PC-3 (cell line): ENCODE measurements at regions of chr2 and their contacts with region 1.

Region 1: GRCh38 chr2:150487537-150488429 is at the start of gene RND3:
- DNase-seq: peak; percentile 99
- ATAC-seq: peak; percentile 46
- H3K4me3 ChIP-seq: peak within 1 kb of the TSS; percentile 90
- H3K27ac ChIP-seq: peak within 1 kb of the TSS; percentile 98
- H3K4me1 ChIP-seq: peaks cover 42% of the 10 kb centered on the region
- H3K27me3 ChIP-seq: no peaks in the 10 kb centered on the region
- CTCF ChIP-seq: peak; percentile 93
- total RNA-seq, gene RND3: 145 and 201 TPM in 2 replicates

Region 2: DNA sequence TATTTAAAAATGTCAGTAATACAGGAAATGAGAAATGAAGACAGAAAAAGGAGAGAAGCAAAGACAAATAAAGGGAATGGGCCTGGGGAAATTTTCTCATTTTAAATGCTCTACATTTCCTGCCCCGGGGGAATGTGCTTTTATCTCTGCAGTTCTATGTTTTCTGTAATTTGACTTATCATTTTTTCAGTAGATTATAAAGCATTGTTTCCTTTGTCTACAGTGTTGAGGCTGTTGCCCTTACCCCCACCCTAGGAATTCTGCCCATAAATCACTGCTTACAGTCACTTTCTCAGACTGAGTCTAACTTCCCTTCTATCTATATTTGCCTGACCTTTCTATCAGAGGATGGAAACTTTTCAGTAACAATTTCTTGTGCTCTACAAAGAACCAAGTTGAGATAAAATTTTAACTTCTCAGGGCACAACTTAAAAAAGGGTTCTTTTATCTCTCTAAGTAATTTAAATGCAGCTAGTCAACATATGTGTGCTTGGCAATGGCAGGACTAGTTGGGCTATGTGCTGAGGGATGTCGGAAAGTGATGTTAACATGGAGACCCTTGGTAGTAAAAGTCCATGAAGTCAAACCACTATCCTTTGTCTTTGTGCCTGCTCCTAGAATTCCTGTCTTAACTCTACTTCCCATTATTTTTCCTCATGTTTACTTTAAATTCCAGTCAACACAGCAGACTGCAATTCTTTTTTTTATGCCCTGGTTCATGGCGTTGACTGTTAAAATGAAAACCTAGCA is 753.7 kb before region 1 on chr2:
- CTCF ChIA-PET with region 1: no interaction called
- POLR2A ChIA-PET with region 1: no interaction called
- intact Hi-C with region 1: loop called (anchors 10 kb)
- DNase-seq: peak; percentile 80
- ATAC-seq: peak; percentile 55
- H3K4me3 ChIP-seq: no peak overlapping the region
- H3K27ac ChIP-seq: peak overlapping the region; percentile 97
- H3K4me1 ChIP-seq: peaks cover 42% of the 10 kb centered on the region
- H3K27me3 ChIP-seq: no peaks in the 10 kb centered on the region
- CTCF ChIP-seq: no peak

Region 3: GRCh38 chr2:149877913-149878312 is 609.9 kb before region 1 on chr2:
- CTCF ChIA-PET with region 1: no interaction called
- POLR2A ChIA-PET with region 1: no interaction called
- intact Hi-C with region 1: no loop called
- DNase-seq: peak; percentile 93
- ATAC-seq: peak; percentile 90
- H3K4me3 ChIP-seq: no peak overlapping the region
- H3K27ac ChIP-seq: peak overlapping the region; percentile 50
- H3K4me1 ChIP-seq: peaks cover 17% of the 10 kb centered on the region
- H3K27me3 ChIP-seq: no peaks in the 10 kb centered on the region
- CTCF ChIP-seq: no peak

Region 4: GRCh38 chr2:149994057-149994753 is 493.6 kb before region 1 on chr2:
- CTCF ChIA-PET with region 1: no interaction called
- POLR2A ChIA-PET with region 1: no interaction called
- intact Hi-C with region 1: loop called (anchors 10 kb)
- DNase-seq: peak; percentile 98
- ATAC-seq: peak; percentile 59
- H3K4me3 ChIP-seq: no peak overlapping the region
- H3K27ac ChIP-seq: peak overlapping the region; percentile 45
- H3K4me1 ChIP-seq: peaks cover 56% of the 10 kb centered on the region
- H3K27me3 ChIP-seq: no peaks in the 10 kb centered on the region
- CTCF ChIP-seq: no peak

Region 5: GRCh38 chr2:150438654-150439053 is 49.1 kb before region 1 on chr2:
- CTCF ChIA-PET with region 1: no interaction called
- POLR2A ChIA-PET with region 1: no interaction called
- intact Hi-C with region 1: no loop called
- DNase-seq: peak; percentile 92
- ATAC-seq: peak; percentile 94
- H3K4me3 ChIP-seq: no peak overlapping the region
- H3K27ac ChIP-seq: peak overlapping the region; percentile 42
- H3K4me1 ChIP-seq: peaks cover 12% of the 10 kb centered on the region
- H3K27me3 ChIP-seq: no peaks in the 10 kb centered on the region
- CTCF ChIP-seq: no peak

Region 6: GRCh38 chr2:150508497-150509137 is 20.8 kb after region 1 on chr2:
- CTCF ChIA-PET with region 1: no interaction called
- POLR2A ChIA-PET with region 1: no interaction called
- intact Hi-C with region 1: no loop called
- DNase-seq: no peak
- ATAC-seq: no peak
- H3K4me3 ChIP-seq: no peak overlapping the region
- H3K27ac ChIP-seq: no peak overlapping the region
- H3K4me1 ChIP-seq: peaks cover 6% of the 10 kb centered on the region
- H3K27me3 ChIP-seq: no peaks in the 10 kb centered on the region
- CTCF ChIP-seq: no peak

Region 7: GRCh38 chr2:150528861-150529801 is 41.3 kb after region 1 on chr2:
- CTCF ChIA-PET with region 1: no interaction called
- POLR2A ChIA-PET with region 1: no interaction called
- intact Hi-C with region 1: loop called (anchors 1 kb)
- DNase-seq: peak; percentile 92
- ATAC-seq: peak; percentile 75
- H3K4me3 ChIP-seq: peak overlapping the region; percentile 34
- H3K27ac ChIP-seq: peak overlapping the region; percentile 91
- H3K4me1 ChIP-seq: peaks cover 69% of the 10 kb centered on the region
- H3K27me3 ChIP-seq: no peaks in the 10 kb centered on the region
- CTCF ChIP-seq: no peak

Region 8: GRCh38 chr2:150681120-150681804 is 193.5 kb after region 1 on chr2:
- CTCF ChIA-PET with region 1: no interaction called
- POLR2A ChIA-PET with region 1: no interaction called
- intact Hi-C with region 1: loop called (anchors 5 kb)
- DNase-seq: peak; percentile 86
- ATAC-seq: peak; percentile 79
- H3K4me3 ChIP-seq: no peak overlapping the region
- H3K27ac ChIP-seq: peak overlapping the region; percentile 93
- H3K4me1 ChIP-seq: peaks cover 45% of the 10 kb centered on the region
- H3K27me3 ChIP-seq: no peaks in the 10 kb centered on the region
- CTCF ChIP-seq: no peak

Region 9: DNA sequence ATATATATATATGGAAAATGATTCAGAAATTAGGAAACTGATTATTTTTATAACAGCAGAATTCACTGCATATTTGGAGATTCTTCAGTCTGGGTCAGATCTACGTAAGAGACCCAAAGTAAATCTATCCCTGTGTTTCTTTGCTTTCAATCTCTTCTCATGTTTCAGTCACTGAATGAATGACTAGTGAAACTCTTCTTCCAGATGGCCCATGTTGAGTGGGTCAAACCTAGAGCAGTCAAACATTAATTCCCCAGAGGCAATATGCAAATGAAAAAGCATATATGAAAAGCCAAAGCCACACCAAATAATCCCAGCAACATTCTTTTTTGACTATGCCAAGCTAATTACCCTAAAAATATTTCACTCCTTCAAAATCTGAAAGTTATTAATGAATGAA is 456.5 kb after region 1 on chr2:
- CTCF ChIA-PET with region 1: no interaction called
- POLR2A ChIA-PET with region 1: no interaction called
- intact Hi-C with region 1: loop called (anchors 10 kb)
- DNase-seq: no peak
- ATAC-seq: no peak
- H3K4me3 ChIP-seq: no peak overlapping the region
- H3K27ac ChIP-seq: no peak overlapping the region
- H3K4me1 ChIP-seq: no peaks in the 10 kb centered on the region
- H3K27me3 ChIP-seq: no peaks in the 10 kb centered on the region
- CTCF ChIP-seq: no peak

Region 10: DNA sequence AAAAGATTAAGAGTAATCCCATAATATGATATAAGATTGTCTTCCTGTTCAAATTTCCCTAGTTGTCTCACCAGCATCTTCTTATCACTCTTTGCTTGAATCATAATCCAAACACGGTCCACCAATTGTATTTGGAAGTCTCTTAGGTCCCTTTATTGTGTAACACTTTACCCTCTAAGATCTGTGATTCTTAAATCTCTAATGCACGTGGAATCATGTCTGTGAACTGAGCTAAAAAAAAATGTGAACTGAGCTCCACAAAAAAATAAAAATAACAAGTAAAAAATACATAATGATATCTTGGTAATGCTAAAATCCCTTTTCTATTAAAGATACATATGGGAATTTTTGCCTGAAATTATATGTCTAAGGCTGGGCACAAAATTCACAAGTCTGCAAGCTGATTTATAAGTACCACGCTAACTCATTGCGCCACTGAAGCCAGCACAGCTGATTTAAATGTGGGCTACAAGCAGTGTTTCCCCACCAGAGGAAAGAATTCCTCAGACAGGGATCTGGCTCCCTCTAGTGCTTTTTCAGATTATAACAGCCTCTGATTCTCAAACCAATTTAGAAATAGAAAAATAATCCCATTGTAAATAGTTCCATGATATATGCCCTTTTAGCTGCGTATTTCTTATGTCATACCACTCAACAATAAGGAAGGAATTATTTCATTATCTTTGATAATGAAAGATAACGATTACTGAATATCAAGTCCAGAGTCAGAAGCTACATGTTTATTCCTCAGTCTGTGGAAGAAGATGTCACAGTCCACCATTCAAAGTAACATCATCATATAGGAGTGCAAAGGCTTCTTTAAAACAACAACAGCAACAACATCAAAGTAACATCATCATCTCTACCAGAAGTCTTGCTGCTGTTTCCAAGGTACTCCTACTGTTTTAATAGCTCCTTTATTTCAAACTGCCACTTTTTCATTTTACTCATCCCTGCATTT is 751.0 kb after region 1 on chr2:
- CTCF ChIA-PET with region 1: no interaction called
- POLR2A ChIA-PET with region 1: no interaction called
- intact Hi-C with region 1: loop called (anchors 2 kb)
- DNase-seq: peak; percentile 86
- ATAC-seq: peak; percentile 52
- H3K4me3 ChIP-seq: no peak overlapping the region
- H3K27ac ChIP-seq: peak overlapping the region; percentile 7
- H3K4me1 ChIP-seq: peaks cover 27% of the 10 kb centered on the region
- H3K27me3 ChIP-seq: no peaks in the 10 kb centered on the region
- CTCF ChIP-seq: peak; percentile 91